Colonic mucosa (tissue), 4 donors: ENCODE measurements at regions of chr4 and their contacts with region 1.

Region 1: DNA sequence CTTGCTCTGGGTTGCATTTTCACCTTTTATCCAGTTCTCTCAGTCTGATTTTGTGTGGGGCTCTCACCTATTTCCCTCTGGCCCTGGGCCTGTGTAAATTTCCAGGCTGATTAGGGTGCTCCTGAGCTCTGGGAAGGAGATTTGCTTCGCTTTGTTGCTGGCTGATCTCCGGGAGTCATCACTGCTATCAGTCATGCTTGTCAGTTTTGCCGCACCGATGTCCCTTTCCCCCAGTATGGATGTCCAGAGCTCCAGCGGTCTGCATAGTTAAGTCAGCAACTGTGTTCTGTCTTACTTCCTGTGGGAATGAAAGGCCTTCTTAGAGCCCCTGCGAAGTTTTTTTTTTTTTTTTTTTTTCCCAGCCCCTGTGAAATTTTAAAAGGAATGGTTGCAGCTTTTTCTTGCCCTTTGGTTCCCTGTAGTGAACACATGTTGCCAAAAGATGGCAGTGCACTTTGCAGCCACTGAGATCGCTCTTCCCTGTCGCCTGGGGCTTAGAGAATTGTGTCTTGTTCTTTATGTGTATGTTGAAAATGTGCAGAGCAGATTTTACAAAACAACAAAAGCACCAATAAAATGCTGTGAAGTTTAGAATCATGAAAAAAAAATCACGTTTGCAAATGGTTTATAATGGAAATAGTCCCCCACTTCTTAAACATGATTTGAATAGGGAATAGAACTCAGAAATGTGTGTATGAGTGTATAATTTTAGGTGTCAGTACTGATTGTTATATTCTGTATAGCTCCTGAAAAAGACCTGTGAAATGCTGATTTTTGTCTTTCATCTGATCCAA is 109.1 kb upstream of the SLC4A4 start:
- DNase-seq: peak; percentile 41
- H3K4me3 ChIP-seq: no peak overlapping the region
- H3K27ac ChIP-seq: no peak overlapping the region
- H3K4me1 ChIP-seq: peaks cover 7% of the 10 kb centered on the region
- H3K27me3 ChIP-seq: no peaks in the 10 kb centered on the region
- CTCF ChIP-seq: peak; percentile 59

Region 2: GRCh38 chr4:71184195-71184781 is 45.4 kb before region 1 on chr4:
- intact Hi-C with region 1: loop called (anchors 5 kb)
- DNase-seq: peak; percentile 73
- H3K4me3 ChIP-seq: no peak overlapping the region
- H3K27ac ChIP-seq: no peak overlapping the region
- H3K4me1 ChIP-seq: no peaks in the 10 kb centered on the region
- H3K27me3 ChIP-seq: no peaks in the 10 kb centered on the region
- CTCF ChIP-seq: peak; percentile 58